Sciatic nerve (tissue), 2 donors: ENCODE measurements at regions of chrX and their contacts with region 1.

Region 1: GRCh38 chrX:53379747-53380146 is 42.7 kb downstream of the SMC1A start:
- DNase-seq: no peak
- ATAC-seq: no peak

Region 2: GRCh38 chrX:53340852-53341607 is 38.7 kb before region 1 on chrX:
- intact Hi-C with region 1: loop called (anchors 2 kb)
- DNase-seq: no peak
- ATAC-seq: no peak

Region 3: GRCh38 chrX:53768451-53768850 is 388.7 kb after region 1 on chrX:
- intact Hi-C with region 1: no loop called
- DNase-seq: no peak
- ATAC-seq: no peak